Activated naive CD4-positive, alpha-beta T cell treated with anti-CD3 and anti-CD28 coated beads for 36 hours (primary cell): ENCODE measurements at regions of chr3 and their contacts with region 1.

Region 1: DNA sequence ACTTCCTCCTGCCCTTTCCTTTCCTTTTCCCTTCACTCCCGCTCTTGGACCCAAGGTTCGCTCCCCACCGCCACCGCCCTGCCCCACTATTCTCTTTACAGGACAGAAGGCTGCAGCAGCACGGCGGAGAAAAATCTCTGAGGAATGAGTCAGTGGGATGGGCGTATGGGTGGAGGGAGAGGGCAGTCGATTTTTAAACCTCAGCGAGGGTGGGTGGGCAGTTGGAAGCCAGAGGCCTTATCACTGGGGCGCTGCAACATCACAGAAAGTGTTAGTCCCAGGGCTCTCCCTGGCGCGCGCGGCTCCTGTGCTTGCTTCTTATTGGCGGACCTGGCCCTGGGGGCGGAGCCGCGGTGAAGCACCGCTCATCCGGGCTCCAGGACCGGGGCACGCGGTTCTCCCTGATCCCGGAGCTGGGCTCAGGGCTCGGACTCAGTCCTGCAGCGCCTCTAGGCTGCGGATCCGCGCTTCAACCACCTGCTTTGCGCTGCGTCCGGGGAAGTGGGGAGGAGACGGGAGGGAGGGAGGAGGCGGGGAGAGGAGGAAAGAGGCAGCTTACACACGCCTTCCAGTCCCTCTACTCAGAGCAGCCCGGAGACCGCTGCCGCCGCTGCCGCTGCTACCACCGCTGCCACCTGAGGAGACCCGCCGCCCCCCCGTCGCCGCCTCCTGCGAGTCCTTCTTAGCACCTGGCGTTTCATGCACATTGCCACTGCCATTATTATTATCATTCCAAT is at the start of gene ALCAM:
- DNase-seq: peak; percentile 90
- H3K4me3 Mint-ChIP-seq: peak within 1 kb of the TSS; percentile 93
- H3K27ac Mint-ChIP-seq: peak within 1 kb of the TSS; percentile 97
- H3K4me1 Mint-ChIP-seq: peaks cover 32% of the 10 kb centered on the region
- H3K27me3 Mint-ChIP-seq: peaks cover 16% of the 10 kb centered on the region
- total RNA-seq, gene ALCAM: 17.5 to 18.7 TPM

Region 2: DNA sequence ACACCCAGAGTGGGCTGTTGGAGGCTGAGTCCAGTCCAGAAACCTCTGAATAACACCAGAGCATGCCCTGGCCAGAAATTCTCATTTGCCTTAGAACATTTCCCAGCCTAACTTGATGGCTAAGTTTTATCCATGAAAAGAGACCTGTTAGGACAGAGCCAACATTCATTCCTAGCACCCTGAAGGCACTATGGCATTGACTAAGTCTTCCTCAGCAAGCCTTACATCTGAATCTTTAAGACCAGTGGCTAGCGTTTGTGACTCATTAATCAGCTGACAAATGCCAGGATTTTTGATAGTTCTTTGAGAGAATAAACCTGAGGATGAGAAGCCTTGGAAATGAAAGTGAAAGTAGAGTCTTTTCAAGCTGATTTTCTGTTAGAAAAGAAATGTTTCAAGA is 1086.9 kb before region 1 on chr3:
- CTCF ChIA-PET with region 1: no interaction called
- intact Hi-C with region 1: loop called (anchors 5 kb)
- DNase-seq: no peak
- H3K4me3 Mint-ChIP-seq: no peak overlapping the region
- H3K27ac Mint-ChIP-seq: no peak overlapping the region
- H3K4me1 Mint-ChIP-seq: peaks cover 5% of the 10 kb centered on the region
- H3K27me3 Mint-ChIP-seq: no peaks in the 10 kb centered on the region

Region 3: DNA sequence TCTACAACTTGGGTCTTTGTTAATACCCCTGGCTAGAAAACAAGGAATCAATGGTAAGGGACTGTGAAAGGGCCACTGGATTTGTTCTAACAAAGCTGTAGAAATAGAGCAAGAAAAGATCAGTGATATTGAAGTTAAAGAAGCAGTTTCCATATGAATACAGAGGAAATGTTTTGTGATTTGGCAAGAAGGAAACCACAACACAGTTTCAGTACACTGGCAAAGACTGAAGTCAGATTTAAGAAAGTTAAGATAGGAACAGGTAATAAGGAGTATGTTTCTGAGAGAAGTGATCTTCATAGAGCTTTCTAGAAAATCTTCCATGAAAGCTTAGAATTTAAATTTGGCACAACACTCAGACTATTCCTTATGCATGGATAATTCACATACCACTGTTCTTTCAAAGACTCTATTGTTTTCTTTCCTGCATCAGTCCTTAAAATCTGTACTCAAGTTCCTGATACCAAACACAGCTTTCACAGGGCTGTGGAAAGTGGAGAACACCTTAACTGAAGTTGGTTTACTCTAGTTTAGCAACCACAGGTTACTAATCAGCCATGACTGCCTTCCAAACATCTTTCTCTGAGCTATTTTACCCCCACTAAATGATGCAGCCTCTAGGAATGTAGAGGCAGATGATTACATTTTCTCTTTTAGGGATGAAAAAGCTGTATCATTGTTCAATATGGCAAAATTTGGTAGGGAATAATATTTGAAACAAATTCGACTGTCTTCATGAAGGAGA is 32.2 kb before region 1 on chr3:
- CTCF ChIA-PET with region 1: interaction called, 3 read pairs
- intact Hi-C with region 1: loop called (anchors 2 kb)
- DNase-seq: no peak
- H3K4me3 Mint-ChIP-seq: no peak overlapping the region
- H3K27ac Mint-ChIP-seq: no peak overlapping the region
- H3K4me1 Mint-ChIP-seq: peaks cover 6% of the 10 kb centered on the region
- H3K27me3 Mint-ChIP-seq: peaks cover 15% of the 10 kb centered on the region

Region 4: GRCh38 chr3:105827959-105828358 is 461.5 kb after region 1 on chr3:
- CTCF ChIA-PET with region 1: no interaction called
- intact Hi-C with region 1: loop called (anchors 1 kb)
- DNase-seq: peak; percentile 26
- H3K4me3 Mint-ChIP-seq: peak overlapping the region; percentile 41
- H3K27ac Mint-ChIP-seq: peak overlapping the region; percentile 99
- H3K4me1 Mint-ChIP-seq: peaks cover 84% of the 10 kb centered on the region
- H3K27me3 Mint-ChIP-seq: no peaks in the 10 kb centered on the region

Region 5: DNA sequence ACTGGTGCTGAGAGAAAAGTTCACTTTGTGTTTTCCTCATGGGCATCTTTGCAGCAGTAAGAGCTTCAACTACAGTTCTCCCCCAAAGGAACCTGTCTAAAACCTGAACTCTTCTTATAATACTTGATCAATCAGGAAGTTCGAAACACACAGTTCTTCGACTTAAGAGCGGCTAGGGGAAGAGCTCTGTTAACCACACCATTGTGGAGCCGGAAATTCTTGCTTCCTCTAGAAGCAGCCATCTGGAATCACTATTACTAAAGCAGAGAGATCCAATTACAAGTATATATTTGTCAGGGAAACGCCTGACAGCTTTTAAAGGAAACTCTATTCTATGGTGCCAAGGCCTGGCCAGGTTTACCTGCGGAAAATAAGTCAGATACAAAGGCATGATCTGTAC is 839.7 kb after region 1 on chr3:
- CTCF ChIA-PET with region 1: no interaction called
- intact Hi-C with region 1: loop called (anchors 1 kb)
- DNase-seq: peak; percentile 47
- H3K4me3 Mint-ChIP-seq: peak overlapping the region; percentile 55
- H3K27ac Mint-ChIP-seq: peak overlapping the region; percentile 98
- H3K4me1 Mint-ChIP-seq: peaks cover 55% of the 10 kb centered on the region
- H3K27me3 Mint-ChIP-seq: no peaks in the 10 kb centered on the region

Region 6: DNA sequence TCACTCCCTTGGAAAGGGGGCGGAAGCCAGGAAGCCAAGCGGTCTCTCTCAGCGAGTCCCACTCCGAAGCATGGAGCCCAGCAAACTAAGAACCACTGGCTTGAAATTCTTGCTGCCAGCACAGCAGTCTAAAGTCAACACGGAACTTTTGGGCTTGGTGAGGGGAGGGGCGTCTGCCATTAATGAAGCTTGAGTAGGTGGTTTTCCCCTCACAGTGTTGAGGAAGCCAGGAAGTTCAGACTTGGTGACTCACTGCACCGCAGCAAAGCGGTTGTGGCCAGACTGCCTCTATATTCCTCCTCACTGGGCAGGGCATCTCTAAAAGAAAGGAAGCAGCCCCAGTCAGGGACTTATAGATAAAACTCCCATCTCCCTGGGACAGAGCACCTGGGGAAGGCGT is 1167.7 kb after region 1 on chr3:
- CTCF ChIA-PET with region 1: no interaction called
- intact Hi-C with region 1: loop called (anchors 5 kb)
- DNase-seq: peak; percentile 69
- H3K4me3 Mint-ChIP-seq: no peak overlapping the region
- H3K27ac Mint-ChIP-seq: no peak overlapping the region
- H3K4me1 Mint-ChIP-seq: peaks cover 15% of the 10 kb centered on the region
- H3K27me3 Mint-ChIP-seq: peaks cover 7% of the 10 kb centered on the region